Ascending aorta (tissue), 2 donors: ENCODE measurements at regions of chr17 and their contacts with region 1.

Region 1: DNA sequence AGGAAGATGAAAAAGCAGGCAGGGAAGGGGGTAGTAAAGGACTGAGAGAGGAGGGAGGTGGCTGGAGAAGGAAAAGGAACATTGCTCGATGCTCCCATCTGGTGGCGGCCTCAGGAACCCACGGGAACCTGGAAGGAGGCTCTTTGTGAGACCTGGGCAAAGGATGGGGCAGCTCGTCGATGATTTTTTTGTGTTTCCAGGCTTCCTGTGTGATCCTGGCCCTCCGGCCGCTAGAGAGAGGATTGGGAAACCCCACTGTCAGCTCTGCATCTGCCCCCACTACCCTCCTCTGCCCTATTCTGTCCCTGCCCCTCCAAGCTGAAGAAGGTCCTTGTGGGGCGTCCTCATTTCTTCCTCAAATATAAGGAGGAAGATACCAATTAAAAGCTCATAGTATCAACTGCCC is 6.6 kb downstream of the WFIKKN2 start:
- DNase-seq: peak in 1 of 2 donors; percentile 78
- H3K4me3 ChIP-seq: no peak overlapping the region
- H3K27ac ChIP-seq: no peak overlapping the region
- H3K4me1 ChIP-seq: no peaks in the 10 kb centered on the region
- H3K27me3 ChIP-seq: no peaks in the 10 kb centered on the region
- CTCF ChIP-seq: peak; percentile 68 to 79 (median 79)

Region 2: GRCh38 chr17:50547035-50547735 is 294.8 kb before region 1 on chr17 and contains the start of gene SPATA20:
- intact Hi-C with region 1: loop called (anchors 1 kb)
- DNase-seq: peak; percentile 72 to 97
- H3K4me3 ChIP-seq: peak within 1 kb of the TSS; percentile 69 to 76
- H3K27ac ChIP-seq: peak within 1 kb of the TSS; percentile 65 to 80
- H3K4me1 ChIP-seq: peaks cover 3 to 16% of the 10 kb centered on the region in 2 donors
- H3K27me3 ChIP-seq: no peaks in the 10 kb centered on the region
- CTCF ChIP-seq: peak; percentile 99
- total RNA-seq, gene SPATA20: 463 TPM

Region 3: DNA sequence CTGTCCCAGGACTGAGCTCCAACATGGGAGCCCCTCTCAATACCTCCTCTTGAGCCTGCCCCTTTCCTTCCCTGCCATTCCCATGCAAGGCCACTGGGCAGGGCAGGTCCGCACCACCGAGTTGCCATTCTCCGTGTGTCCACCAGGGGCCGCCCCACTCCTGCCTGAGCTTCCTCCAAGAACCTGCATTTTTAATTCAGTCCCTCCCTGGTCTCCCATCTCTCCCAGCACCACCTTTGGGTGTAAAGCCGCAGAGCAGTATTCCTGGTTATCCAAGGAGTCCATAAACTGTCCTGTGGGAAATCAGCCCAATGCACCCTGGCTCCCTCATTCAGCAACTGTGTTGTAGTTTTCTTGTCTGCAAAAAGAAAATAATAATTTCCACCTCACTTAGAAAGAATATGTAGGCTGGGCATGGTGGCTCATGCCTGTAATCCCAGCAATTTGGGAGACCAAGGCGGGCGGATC is 58.7 kb before region 1 on chr17:
- intact Hi-C with region 1: loop called (anchors 1 kb)
- DNase-seq: peak in 1 of 2 donors; percentile 91
- H3K4me3 ChIP-seq: no peak overlapping the region
- H3K27ac ChIP-seq: no peak overlapping the region
- H3K4me1 ChIP-seq: peaks cover 0 to 4% of the 10 kb centered on the region in 2 donors
- H3K27me3 ChIP-seq: no peaks in the 10 kb centered on the region
- CTCF ChIP-seq: peak; percentile 98 to 100 (median 99)

Region 4: DNA sequence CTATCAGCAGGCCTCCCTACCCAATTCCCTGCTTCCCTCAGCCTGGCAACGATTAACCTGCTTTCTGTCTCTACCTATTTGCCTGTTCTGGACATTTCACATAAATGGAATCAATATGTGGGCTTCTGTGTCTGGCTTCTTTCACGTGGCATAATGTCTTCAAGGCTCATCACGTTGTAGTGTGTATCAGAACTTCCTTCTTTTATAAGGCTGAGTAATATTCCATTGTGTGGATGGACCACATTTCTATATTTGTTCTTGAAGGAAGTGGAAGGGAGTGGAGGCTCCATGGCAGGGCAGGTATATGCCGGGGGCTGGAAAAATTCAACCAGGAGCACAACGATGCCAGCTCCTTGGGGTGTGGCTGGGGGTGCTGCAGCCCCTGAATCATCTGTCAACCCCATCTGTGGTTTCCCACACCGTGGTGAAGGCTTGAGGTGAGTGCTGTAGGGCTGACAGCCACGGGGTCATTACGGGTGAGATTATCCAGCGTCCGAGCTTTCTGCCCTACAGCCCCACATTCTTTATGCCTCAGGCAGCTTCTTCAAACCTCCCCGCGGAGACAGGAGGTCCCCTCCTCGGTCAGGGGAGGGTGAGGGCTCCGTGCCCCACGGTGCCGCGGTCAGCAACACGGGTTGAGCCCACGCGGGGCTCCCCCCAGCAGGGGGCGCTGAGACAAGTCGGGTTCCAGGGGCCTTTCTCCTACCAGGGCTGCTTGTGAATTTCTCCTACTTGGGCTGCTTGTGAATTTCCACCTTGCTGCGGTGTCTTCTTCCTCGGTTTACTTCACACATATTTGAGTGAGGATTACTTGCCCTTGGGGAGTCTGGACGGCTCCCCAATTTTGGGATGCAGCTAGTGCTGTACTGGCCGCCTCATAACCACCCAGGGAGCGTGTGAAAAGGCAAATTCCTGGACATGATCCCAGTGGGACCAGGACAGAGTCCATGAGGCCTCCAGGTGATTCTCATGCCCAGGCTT is 24.9 kb before region 1 on chr17:
- intact Hi-C with region 1: loop called (anchors 2 kb)
- DNase-seq: no peak
- H3K4me3 ChIP-seq: no peak overlapping the region
- H3K27ac ChIP-seq: no peak overlapping the region
- H3K4me1 ChIP-seq: no peaks in the 10 kb centered on the region
- H3K27me3 ChIP-seq: no peaks in the 10 kb centered on the region
- CTCF ChIP-seq: peak in 2 of 3 experiments; percentile 63 to 74